ENCODE measurements at regions of chr4 and their contacts with region 1.

Region 1: DNA sequence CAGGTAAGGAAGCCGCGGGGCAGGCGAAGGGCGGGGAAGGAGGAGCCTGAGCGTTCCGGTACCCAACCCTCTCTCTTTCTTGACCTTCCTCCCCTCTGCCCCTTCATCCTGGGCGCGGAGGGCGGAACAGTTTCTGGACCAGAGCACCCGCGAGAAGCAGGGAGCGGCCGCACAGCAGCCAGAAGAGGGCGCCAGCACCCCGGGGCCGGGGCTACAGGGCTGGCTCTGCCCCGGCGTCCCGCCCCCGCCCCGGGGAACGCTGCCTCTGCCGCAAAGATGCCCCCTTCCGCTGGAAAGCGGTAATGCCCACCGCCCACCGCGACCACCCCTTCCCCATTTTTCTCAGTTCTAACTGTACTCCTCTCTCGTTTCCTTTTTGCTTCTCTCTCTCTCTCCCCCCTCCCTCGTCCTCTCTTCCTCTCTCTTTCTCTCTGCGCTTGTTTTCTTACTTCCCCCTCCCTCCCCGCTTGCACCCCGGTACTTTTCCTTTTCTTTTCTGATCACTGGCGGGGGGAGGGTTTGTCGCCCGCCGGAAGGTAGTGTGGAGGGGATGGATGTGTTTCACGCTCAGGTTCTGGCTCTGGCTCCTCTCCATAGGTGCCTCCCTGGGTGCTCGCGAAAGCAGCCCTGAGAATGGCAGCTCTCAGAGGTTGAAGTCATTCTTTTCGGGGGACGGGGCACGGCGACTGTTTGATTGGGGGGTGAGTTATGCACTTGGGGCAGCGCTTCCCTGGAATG is 13.1 kb upstream of the PRDM8 start:
- DNase-seq: peak; percentile 98
- H3K4me3 Mint-ChIP-seq: peak overlapping the region; percentile 96
- H3K27ac Mint-ChIP-seq: peak overlapping the region; percentile 95
- H3K4me1 Mint-ChIP-seq: peaks cover 48% of the 10 kb centered on the region
- H3K27me3 Mint-ChIP-seq: peaks cover 24% of the 10 kb centered on the region

Region 2: DNA sequence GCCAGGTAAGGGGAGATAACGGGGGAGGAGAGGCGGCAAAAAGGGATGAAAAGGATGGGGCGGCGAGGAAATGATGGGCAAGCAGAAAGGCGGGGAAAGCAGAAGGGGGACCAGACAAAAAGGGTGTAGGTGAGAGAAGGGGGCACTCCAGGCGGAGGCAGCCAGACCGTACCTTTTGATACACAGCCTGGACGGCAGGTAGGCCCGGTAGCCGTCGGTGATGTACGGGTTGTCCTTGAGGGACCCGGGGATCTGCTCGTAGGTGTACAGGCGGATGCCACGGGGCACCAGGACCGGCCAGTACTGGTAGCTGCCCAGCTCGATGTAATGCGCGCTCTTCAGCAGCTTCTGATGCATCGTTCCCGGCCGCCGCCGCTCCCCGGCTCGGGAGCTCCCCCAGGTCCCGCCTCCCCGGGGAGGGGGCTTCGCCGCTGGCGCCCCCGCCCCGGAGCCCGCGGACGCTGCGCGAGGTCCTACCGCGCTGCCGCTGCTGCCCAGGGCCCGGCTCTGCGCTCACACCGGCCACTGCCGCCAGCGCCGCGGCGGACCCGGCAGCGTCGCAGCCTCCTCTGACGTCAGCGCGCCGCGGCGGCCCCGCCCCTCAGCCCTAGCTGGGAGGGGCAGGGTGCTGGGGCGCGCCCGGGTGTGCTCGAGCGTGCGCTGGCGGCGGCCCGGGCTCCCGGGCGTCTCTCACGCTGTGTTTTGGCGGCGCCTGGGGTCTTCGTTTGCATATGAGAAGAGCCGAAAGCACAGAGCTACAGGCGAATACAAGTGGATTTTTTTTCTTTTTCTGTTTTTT is 1245.2 kb before region 1 on chr4 and contains the start of gene PAQR3:
- intact Hi-C with region 1: loop called (anchors 5 kb)
- DNase-seq: peak; percentile 96
- H3K4me3 Mint-ChIP-seq: peak within 1 kb of the TSS; percentile 94
- H3K27ac Mint-ChIP-seq: peak within 1 kb of the TSS; percentile 85
- H3K4me1 Mint-ChIP-seq: peaks cover 37% of the 10 kb centered on the region
- H3K27me3 Mint-ChIP-seq: peaks cover 16% of the 10 kb centered on the region
- total RNA-seq, gene PAQR3: 14.1 and 14.9 TPM in 2 replicates

Region 3: DNA sequence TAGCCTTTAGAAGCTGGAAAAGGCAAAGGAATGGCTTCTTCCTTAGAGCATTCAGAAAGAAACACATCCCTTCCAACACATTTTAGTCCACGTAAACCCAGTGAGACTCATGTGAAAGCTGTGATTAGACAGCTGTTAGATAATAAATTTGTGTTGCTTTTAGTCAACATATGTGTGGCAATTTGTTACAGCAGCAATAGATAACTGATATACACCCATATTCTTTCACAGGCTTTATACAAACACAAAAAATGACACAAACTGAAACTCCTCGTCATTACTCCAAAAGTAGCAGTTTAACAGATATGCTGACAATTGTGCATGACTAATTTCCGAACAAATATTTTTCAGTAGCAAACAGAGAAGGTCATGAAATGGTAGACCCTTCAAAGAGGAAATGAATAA is 176.5 kb before region 1 on chr4:
- intact Hi-C with region 1: loop called (anchors 2 kb)
- DNase-seq: no peak
- H3K4me3 Mint-ChIP-seq: peak overlapping the region; percentile 51
- H3K27ac Mint-ChIP-seq: peak overlapping the region; percentile 85
- H3K4me1 Mint-ChIP-seq: peaks cover 53% of the 10 kb centered on the region
- H3K27me3 Mint-ChIP-seq: no peaks in the 10 kb centered on the region

Region 4: GRCh38 chr4:80125252-80126177 is 58.7 kb before region 1 on chr4:
- intact Hi-C with region 1: loop called (anchors 1 kb)
- DNase-seq: peak; percentile 81
- H3K4me3 Mint-ChIP-seq: peak overlapping the region; percentile 35
- H3K27ac Mint-ChIP-seq: peak overlapping the region; percentile 77
- H3K4me1 Mint-ChIP-seq: peaks cover 51% of the 10 kb centered on the region
- H3K27me3 Mint-ChIP-seq: no peaks in the 10 kb centered on the region

Region 5: GRCh38 chr4:80173401-80173800 is 10.8 kb before region 1 on chr4:
- intact Hi-C with region 1: loop called (anchors 1 kb)
- DNase-seq: peak; percentile 89
- H3K4me3 Mint-ChIP-seq: peak overlapping the region; percentile 68
- H3K27ac Mint-ChIP-seq: peak overlapping the region; percentile 95
- H3K4me1 Mint-ChIP-seq: peaks cover 50% of the 10 kb centered on the region
- H3K27me3 Mint-ChIP-seq: no peaks in the 10 kb centered on the region